Right cardiac atrium (tissue), 5 donors: ENCODE measurements at regions of chr3 and their contacts with region 1.

Region 1: GRCh38 chr3:51362476-51362875 is 22.6 kb upstream of the MANF start:
- DNase-seq: no peak
- ATAC-seq: no peak
- H3K4me3 ChIP-seq: no peak overlapping the region
- H3K27ac ChIP-seq: no peak overlapping the region
- H3K4me1 ChIP-seq: no peaks in the 10 kb centered on the region
- H3K27me3 ChIP-seq: no peaks in the 10 kb centered on the region

Region 2: GRCh38 chr3:50830451-50830850 is 532.0 kb before region 1 on chr3:
- intact Hi-C with region 1: no loop called
- DNase-seq: no peak
- ATAC-seq: no peak
- H3K4me3 ChIP-seq: no peak overlapping the region
- H3K27ac ChIP-seq: no peak overlapping the region
- H3K4me1 ChIP-seq: no peaks in the 10 kb centered on the region
- H3K27me3 ChIP-seq: no peaks in the 10 kb centered on the region

Region 3: DNA sequence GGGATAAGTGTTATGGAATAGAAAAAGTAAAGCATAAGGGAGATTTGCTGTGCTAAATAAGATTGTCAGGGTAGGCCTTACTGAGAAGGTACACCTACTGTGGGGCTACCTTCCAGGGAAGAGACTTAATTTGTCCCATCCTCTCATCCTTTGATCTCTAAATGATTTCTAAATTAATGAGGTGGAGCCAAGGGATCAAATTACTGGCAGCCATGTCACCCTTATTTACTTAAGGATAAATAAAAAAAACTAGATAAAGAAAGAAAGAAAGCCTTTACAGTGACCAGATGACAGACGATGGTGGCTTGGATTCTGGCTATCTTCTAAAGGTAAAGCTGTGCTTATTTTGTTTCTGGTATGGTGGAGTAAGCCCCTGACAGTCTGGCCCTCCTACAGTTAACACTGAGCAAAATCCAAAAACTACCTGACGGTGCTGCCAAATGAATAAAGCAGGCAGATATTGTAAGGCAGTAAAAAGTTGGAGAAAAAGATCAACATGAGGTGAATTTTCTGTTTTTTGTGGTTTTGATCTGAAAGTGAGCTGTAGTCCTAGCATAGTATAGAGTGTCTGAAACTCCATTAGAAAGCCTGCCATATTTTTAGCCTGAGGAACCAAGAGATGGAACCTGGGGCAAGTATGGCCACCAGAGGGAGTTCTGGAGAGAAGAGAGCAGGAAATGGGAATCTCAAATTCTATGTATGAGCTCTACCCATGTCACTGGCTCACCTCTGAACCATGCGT is 262.5 kb before region 1 on chr3:
- intact Hi-C with region 1: loop called in 1 of 4 experiments (anchors 10 kb)
- DNase-seq: peak in 1 of 3 donors; percentile 67
- ATAC-seq: peak; percentile 52 to 69
- H3K4me3 ChIP-seq: no peak overlapping the region
- H3K27ac ChIP-seq: no peak overlapping the region
- H3K4me1 ChIP-seq: no peaks in the 10 kb centered on the region
- H3K27me3 ChIP-seq: no peaks in the 10 kb centered on the region

Region 4: GRCh38 chr3:51216291-51216690 is 146.2 kb before region 1 on chr3:
- intact Hi-C with region 1: no loop called
- DNase-seq: no peak
- ATAC-seq: no peak
- H3K4me3 ChIP-seq: no peak overlapping the region
- H3K27ac ChIP-seq: no peak overlapping the region
- H3K4me1 ChIP-seq: no peaks in the 10 kb centered on the region
- H3K27me3 ChIP-seq: no peaks in the 10 kb centered on the region